HCT116 (cell line): ENCODE measurements at regions of chr5 and their contacts with region 1.

Region 1: DNA sequence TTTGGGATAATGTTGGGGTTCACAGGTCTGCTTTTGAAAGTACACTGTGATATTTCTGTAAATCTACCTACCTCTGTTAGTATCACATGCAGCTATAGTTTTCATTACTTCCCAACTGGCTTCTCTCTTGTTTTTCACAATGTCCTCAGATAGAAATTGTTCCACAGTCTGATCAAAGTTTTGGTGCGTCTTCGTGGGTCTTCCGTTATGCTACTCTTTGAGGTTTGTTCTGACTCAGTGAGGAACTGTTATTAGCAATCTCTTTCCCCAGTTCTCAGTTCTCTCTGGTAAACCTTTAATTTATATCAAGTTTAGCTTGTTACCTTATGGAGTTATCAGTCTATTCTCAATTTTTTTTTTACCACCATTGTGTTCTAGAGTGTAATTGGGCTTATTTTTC is 2061.2 kb upstream of the CDH9 start:
- DNase-seq: no peak
- ATAC-seq: no peak
- H3K4me3 ChIP-seq: no peak overlapping the region
- H3K27ac ChIP-seq: no peak overlapping the region
- H3K4me1 ChIP-seq: no peaks in the 10 kb centered on the region
- H3K27me3 ChIP-seq: no peaks in the 10 kb centered on the region
- CTCF ChIP-seq: no peak
- POLR2A ChIP-seq: no peak
- RAD21 ChIP-seq: no peak

Region 2: GRCh38 chr5:28249771-28250415 is 849.7 kb before region 1 on chr5:
- CTCF ChIA-PET with region 1: no interaction called
- POLR2A ChIA-PET with region 1: no interaction called
- RAD21 ChIA-PET with region 1: no interaction called
- intact Hi-C with region 1: no loop called
- DNase-seq: no peak
- ATAC-seq: no peak
- H3K4me3 ChIP-seq: no peak overlapping the region
- H3K27ac ChIP-seq: no peak overlapping the region
- H3K4me1 ChIP-seq: no peaks in the 10 kb centered on the region
- H3K27me3 ChIP-seq: no peaks in the 10 kb centered on the region
- CTCF ChIP-seq: no peak
- POLR2A ChIP-seq: no peak
- RAD21 ChIP-seq: no peak

Region 3: DNA sequence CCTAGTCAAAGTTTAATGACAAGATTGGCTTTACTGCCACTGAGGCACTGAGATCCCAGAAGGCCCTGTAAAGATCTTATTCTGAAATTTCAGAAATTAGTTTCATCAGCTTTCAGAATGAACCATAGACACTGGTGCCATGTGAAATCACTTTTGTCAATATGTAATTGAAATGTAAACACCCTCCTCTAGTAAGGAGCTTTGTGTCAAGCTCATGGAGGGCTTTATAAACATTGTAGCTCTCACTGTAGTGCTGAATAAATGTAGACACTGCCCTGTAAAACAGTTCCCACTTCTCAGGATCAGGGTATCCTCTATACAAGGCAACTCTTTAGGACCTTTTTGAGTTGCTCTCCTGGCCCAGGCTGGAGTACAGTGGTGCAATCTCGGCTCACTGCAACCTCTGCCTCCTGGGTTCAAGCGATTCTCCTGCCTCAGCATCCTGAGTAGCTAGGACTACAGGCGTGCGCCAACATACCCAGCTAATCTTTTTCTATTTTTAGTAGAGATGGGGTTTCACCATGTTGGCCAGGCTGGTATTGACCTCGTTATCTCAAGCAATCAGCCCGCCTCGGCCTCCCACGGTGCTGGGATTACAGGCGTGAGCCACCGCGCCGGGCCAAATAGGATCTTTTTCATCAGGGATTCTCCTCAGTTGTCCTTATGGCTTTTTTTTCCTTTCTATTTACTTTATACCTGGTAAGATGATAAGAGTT is 237.3 kb before region 1 on chr5:
- CTCF ChIA-PET with region 1: no interaction called
- POLR2A ChIA-PET with region 1: no interaction called
- RAD21 ChIA-PET with region 1: no interaction called
- intact Hi-C with region 1: loop called (anchors 5 kb)
- DNase-seq: no peak
- ATAC-seq: no peak
- H3K4me3 ChIP-seq: no peak overlapping the region
- H3K27ac ChIP-seq: no peak overlapping the region
- H3K4me1 ChIP-seq: no peaks in the 10 kb centered on the region
- H3K27me3 ChIP-seq: no peaks in the 10 kb centered on the region
- CTCF ChIP-seq: no peak
- POLR2A ChIP-seq: no peak
- RAD21 ChIP-seq: no peak

Region 4: GRCh38 chr5:29924107-29924506 is 824.5 kb after region 1 on chr5:
- CTCF ChIA-PET with region 1: no interaction called
- POLR2A ChIA-PET with region 1: no interaction called
- RAD21 ChIA-PET with region 1: no interaction called
- intact Hi-C with region 1: no loop called
- DNase-seq: no peak
- ATAC-seq: no peak
- H3K4me3 ChIP-seq: no peak overlapping the region
- H3K27ac ChIP-seq: no peak overlapping the region
- H3K4me1 ChIP-seq: no peaks in the 10 kb centered on the region
- H3K27me3 ChIP-seq: no peaks in the 10 kb centered on the region
- CTCF ChIP-seq: no peak
- POLR2A ChIP-seq: no peak
- RAD21 ChIP-seq: no peak

Region 5: DNA sequence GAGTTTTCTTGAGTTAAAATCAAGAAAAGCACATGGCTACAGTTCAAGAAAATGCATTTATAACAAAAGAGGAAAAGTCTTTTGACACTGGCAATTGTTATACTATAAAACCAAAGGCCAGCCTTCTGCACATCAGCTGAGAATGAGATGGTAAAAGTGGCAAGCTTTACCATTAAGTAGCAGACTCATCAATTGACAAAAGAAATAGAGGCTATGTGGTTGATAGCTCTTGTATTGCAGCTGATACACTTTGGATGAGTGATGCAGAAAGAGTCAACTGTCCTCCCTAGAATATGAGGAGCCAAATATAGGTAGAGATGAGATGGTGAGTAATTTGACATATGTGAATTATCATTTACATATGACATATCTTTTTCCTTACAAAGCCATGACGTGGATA is 993.0 kb after region 1 on chr5:
- CTCF ChIA-PET with region 1: no interaction called
- POLR2A ChIA-PET with region 1: no interaction called
- RAD21 ChIA-PET with region 1: no interaction called
- intact Hi-C with region 1: no loop called
- DNase-seq: no peak
- ATAC-seq: no peak
- H3K4me3 ChIP-seq: no peak overlapping the region
- H3K27ac ChIP-seq: no peak overlapping the region
- H3K4me1 ChIP-seq: no peaks in the 10 kb centered on the region
- H3K27me3 ChIP-seq: no peaks in the 10 kb centered on the region
- CTCF ChIP-seq: no peak
- POLR2A ChIP-seq: no peak
- RAD21 ChIP-seq: no peak